Cardiac septum (tissue), 1 donor: ENCODE measurements at regions of chr2 and their contacts with region 1.

Region 1: GRCh38 chr2:175251425-175252041 is 70.0 kb upstream of the ATP5MC3 start:
- DNase-seq: no peak

Region 2: GRCh38 chr2:175366815-175367214 is 115.3 kb after region 1 on chr2:
- intact Hi-C with region 1: no loop called
- DNase-seq: no peak

Region 3: GRCh38 chr2:176096986-176097819 is 845.7 kb after region 1 on chr2:
- intact Hi-C with region 1: loop called (anchors 5 kb)
- DNase-seq: no peak